Activated CD8-positive, alpha-beta T cell treated with anti-CD3 and anti-CD28 coated beads for 36 hours (primary cell): ENCODE measurements at regions of chr20 and their contacts with region 1.

Region 1: DNA sequence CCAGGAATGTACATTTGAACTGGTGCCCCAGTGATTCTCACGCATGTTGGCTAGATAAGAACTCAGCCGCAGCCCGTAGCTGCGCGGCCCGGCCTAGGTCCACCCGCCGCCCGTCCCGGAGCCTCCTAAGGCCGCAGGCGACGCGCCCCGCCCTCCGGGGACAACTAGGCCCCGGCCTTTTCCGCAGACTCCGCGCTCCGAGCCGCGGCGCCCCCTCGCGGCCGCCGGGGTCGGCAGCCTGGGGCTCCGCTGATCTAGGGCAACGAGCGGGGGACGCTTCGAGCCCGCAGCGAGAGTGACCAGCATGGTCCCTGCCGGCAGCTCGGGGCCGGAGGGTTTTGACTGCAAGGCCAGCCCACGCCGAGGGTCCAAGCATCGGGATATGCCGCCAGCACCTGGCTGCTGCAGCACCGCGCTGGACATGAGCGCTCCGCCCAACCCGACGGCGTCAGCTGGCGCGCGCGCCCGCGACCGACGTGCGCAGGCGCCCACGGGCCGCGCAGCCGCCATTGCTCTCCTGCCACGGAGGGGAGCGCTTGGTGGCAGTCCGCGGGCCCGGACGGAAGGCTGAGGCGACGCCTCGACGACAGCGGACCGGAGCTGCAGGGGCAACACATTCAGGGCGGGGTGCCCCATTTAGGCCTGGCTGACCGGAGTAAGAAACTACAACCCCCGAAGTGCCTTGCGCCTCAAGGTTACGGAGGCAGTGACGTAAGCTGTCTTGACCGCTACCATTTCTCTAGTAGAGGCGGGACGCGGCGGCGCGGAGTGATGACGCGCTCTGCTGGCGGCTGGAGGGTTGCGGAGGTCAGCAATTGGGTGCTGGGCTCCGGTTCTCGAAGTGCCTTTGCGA is at the start of gene AP5S1:
- DNase-seq: peak; percentile 97
- ATAC-seq: peak; percentile 79
- H3K4me3 Mint-ChIP-seq: peak within 1 kb of the TSS; percentile 92
- H3K27ac Mint-ChIP-seq: peak within 1 kb of the TSS; percentile 97
- H3K4me1 Mint-ChIP-seq: peaks cover 33% of the 10 kb centered on the region
- H3K27me3 Mint-ChIP-seq: no peaks in the 10 kb centered on the region
- CTCF ChIP-seq: peak; percentile 88
- total RNA-seq, gene AP5S1: 7.4 to 8.6 TPM

Region 2: GRCh38 chr20:3781153-3781910 is 38.9 kb before region 1 on chr20 and contains the start of gene SPEF1:
- CTCF ChIA-PET with region 1: interaction called, 69 read pairs
- POLR2A ChIA-PET with region 1: interaction called, 46 read pairs
- intact Hi-C with region 1: loop called (anchors 2 kb)
- DNase-seq: peak; percentile 64
- ATAC-seq: peak; percentile 63
- H3K4me3 Mint-ChIP-seq: peak within 1 kb of the TSS; percentile 43
- H3K27ac Mint-ChIP-seq: no peak within 1 kb of the TSS
- H3K4me1 Mint-ChIP-seq: peaks cover 42% of the 10 kb centered on the region
- H3K27me3 Mint-ChIP-seq: peaks cover 14% of the 10 kb centered on the region
- CTCF ChIP-seq: no peak
- total RNA-seq, gene SPEF1: 0.23 TPM in 1 of 2 experiments, not detected in the other

Region 3: GRCh38 chr20:3786665-3787323 is 33.5 kb before region 1 on chr20 and contains the start of gene CENPB:
- CTCF ChIA-PET with region 1: interaction called, 69 read pairs
- POLR2A ChIA-PET with region 1: interaction called, 46 read pairs
- intact Hi-C with region 1: loop called (anchors 2 kb)
- DNase-seq: peak; percentile 89
- ATAC-seq: peak; percentile 92
- H3K4me3 Mint-ChIP-seq: peak within 1 kb of the TSS; percentile 80
- H3K27ac Mint-ChIP-seq: peak within 1 kb of the TSS; percentile 85
- H3K4me1 Mint-ChIP-seq: peaks cover 37% of the 10 kb centered on the region
- H3K27me3 Mint-ChIP-seq: no peaks in the 10 kb centered on the region
- CTCF ChIP-seq: peak; percentile 95
- total RNA-seq, gene CENPB: 35.0 to 35.4 TPM

Region 4: DNA sequence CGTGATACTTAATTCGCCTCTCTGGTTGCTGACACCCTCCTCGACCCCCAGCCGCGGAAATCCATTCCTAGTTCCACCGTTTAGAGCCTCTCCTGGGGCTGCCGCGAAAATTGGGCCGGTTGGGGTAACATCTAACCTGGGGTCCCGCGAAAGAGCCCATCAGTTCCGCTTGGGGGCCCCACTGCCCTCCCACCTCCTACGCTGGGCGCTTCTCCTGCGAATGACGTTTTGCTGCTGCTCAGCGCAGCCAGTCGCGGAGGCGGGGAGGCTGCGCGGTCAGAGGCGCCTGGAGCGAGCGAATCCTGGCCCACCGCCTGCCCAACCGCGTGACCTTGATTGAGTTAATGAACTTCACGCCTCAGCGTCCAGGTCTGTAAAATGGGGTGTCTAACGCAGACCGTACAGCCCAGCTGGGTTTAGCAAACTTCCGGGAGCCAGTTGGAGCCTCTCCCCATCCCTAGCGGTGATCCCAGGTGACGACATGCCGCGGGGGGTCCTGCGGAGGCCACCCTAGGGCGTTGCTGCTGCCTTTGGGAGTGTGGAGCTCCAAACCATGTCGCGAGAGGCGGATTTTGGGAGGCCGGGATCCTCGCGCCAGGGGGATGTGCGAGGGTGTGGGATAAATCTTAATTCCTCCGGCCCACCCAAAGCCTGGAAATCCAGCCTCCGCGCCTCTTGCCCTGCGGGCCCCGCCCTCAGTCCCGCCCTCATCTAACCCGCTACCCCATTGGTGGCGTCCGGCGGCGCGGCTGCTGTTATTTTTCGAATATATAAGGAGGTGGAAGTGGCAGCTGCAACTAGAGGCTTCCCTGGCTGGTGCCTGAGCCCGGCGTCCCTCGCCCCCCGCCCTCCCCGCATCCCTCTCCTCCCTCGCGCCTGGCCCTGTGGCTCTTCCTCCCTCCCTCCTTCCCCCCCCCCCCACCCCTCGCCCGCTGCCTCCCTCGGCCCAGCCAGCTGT is 24.5 kb before region 1 on chr20 and contains the start of gene CDC25B:
- CTCF ChIA-PET with region 1: interaction called, 13 read pairs
- POLR2A ChIA-PET with region 1: interaction called, 15 read pairs
- intact Hi-C with region 1: no loop called
- DNase-seq: peak; percentile 96
- ATAC-seq: peak; percentile 78
- H3K4me3 Mint-ChIP-seq: peak within 1 kb of the TSS; percentile 99
- H3K27ac Mint-ChIP-seq: peak within 1 kb of the TSS; percentile 99
- H3K4me1 Mint-ChIP-seq: peaks cover 44% of the 10 kb centered on the region
- H3K27me3 Mint-ChIP-seq: no peaks in the 10 kb centered on the region
- CTCF ChIP-seq: peak; percentile 38
- total RNA-seq, gene CDC25B: 66.9 to 67.1 TPM

Region 5: DNA sequence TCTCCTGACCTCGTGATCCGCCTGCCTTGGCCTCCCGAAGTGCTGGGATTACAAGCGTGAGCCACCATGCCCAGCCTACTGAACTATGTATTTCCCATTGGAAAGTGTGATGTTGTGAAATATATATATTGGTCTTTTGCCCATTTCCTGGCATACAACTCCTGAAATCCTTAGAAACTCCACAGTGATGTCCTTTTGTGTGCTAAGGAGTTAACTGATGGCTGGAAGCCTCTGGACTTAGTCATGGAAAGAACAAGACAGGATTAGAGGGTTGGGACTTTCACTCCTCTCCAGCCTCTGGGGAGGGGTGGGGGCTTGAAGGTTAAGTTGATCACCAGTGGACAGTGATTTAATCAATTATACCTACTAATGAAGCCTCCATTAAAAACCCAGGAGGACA is 76.0 kb after region 1 on chr20:
- CTCF ChIA-PET with region 1: no interaction called
- POLR2A ChIA-PET with region 1: no interaction called
- intact Hi-C with region 1: no loop called
- DNase-seq: no peak
- ATAC-seq: no peak
- H3K4me3 Mint-ChIP-seq: no peak overlapping the region
- H3K27ac Mint-ChIP-seq: no peak overlapping the region
- H3K4me1 Mint-ChIP-seq: peaks cover 71% of the 10 kb centered on the region
- H3K27me3 Mint-ChIP-seq: no peaks in the 10 kb centered on the region
- CTCF ChIP-seq: no peak

Region 6: DNA sequence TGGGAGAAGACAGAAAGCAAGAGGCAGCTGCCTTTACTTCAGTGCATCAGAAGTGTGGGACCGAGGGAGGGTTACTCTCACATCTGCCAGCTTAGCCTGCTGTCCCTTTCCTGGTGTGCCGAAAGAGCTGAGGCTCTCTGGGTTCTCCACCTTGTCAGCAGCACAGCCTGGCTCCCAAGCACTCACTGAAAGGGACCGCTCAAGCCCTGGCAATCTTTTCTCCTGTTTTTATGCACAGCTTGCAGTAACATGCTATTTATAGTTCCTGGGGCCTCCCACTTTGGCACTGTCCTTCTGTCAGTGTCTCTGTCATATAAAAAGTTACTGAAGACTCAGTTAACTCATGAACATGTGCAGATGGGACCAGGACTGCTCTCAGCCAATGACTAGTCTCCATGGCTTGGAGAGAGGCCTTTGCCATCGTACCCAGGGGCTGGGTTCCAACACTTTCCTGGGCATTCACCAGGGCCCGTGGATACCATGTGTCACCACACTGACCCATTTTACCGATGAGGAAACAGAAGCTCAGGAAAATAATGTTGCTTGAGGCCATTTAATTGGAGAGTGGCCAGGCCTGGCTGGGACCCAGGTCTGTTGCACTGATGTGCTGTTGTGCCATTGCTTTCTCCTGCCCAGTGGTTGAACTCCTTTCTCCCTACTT is 115.2 kb after region 1 on chr20:
- CTCF ChIA-PET with region 1: no interaction called
- POLR2A ChIA-PET with region 1: no interaction called
- intact Hi-C with region 1: no loop called
- DNase-seq: no peak
- ATAC-seq: no peak
- H3K4me3 Mint-ChIP-seq: no peak overlapping the region
- H3K27ac Mint-ChIP-seq: no peak overlapping the region
- H3K4me1 Mint-ChIP-seq: peaks cover 14% of the 10 kb centered on the region
- H3K27me3 Mint-ChIP-seq: no peaks in the 10 kb centered on the region
- CTCF ChIP-seq: no peak

Region 7: DNA sequence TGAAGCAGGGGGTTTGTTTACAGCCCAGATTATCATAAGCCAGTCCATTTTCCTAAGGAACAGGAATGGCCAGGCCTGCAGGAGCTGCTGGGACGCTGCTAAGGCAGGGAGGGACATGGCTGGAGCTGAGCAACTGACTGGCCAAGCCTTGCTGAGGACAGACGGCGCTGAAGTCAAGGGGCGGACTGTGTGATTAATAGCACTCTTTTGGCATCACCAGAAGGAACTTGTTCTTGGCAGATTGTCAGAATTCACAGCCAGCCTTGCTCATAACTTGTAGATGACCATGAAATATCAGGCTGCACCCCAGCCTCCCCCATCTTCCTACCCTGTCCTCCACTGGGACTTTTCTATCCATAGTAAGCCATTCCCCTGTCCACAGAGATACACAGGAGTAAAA is 413.9 kb after region 1 on chr20:
- CTCF ChIA-PET with region 1: no interaction called
- POLR2A ChIA-PET with region 1: no interaction called
- intact Hi-C with region 1: no loop called
- DNase-seq: no peak
- ATAC-seq: no peak
- H3K4me3 Mint-ChIP-seq: no peak overlapping the region
- H3K27ac Mint-ChIP-seq: no peak overlapping the region
- H3K4me1 Mint-ChIP-seq: no peaks in the 10 kb centered on the region
- H3K27me3 Mint-ChIP-seq: peaks cover 15% of the 10 kb centered on the region
- CTCF ChIP-seq: no peak